Activated B cell treated with CpG ODN at 0.5 μM for 24 hours (primary cell): ENCODE measurements at regions of chr7 and their contacts with region 1.

Region 1: GRCh38 chr7:135147899-135148721 is at the start of gene TMEM140:
- DNase-seq: no peak
- ATAC-seq: peak; percentile 72
- H3K4me3 Mint-ChIP-seq: peak within 1 kb of the TSS; percentile 83
- H3K27ac Mint-ChIP-seq: peak within 1 kb of the TSS; percentile 93
- H3K4me1 Mint-ChIP-seq: peaks cover 73% of the 10 kb centered on the region
- H3K27me3 Mint-ChIP-seq: no peaks in the 10 kb centered on the region
- CTCF ChIP-seq: no peak
- total RNA-seq, gene TMEM140: 18.6 and 20.9 TPM in 2 replicates

Region 2: GRCh38 chr7:134905375-134905774 is 242.7 kb before region 1 on chr7:
- CTCF ChIA-PET with region 1: no interaction called
- POLR2A ChIA-PET with region 1: no interaction called
- intact Hi-C with region 1: no loop called
- DNase-seq: no peak
- ATAC-seq: no peak
- H3K4me3 Mint-ChIP-seq: no peak overlapping the region
- H3K27ac Mint-ChIP-seq: no peak overlapping the region
- H3K4me1 Mint-ChIP-seq: peaks cover 11% of the 10 kb centered on the region
- H3K27me3 Mint-ChIP-seq: peaks cover 4% of the 10 kb centered on the region
- CTCF ChIP-seq: no peak

Region 3: DNA sequence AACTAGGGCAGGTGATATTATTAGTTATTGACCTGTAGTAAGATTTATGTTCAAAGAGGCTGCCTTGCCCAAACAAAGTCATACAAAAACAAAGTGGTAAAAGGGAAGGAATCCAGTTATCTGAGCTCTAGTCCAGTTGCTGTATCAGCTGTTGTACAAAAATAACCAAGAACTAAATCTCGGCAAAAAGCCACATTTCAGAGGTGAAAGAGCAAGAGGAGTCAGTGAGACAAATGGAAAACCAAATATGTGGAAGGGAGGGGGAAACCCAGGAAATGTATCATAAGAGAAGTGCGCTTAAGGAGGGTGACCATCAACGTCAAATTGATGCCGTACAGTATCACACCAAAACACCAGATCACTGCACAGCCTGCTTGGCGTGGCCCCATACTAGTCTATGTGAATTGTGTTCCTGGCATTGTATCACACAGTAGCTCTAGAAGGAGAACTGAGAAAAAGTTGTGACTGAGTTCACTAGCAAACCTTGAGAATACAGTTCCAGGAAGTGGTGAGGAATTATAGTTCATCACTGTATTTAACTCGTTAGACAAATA is 155.4 kb before region 1 on chr7:
- CTCF ChIA-PET with region 1: interaction called, 3 read pairs
- POLR2A ChIA-PET with region 1: interaction called, 44 read pairs
- intact Hi-C with region 1: loop called (anchors 2 kb)
- DNase-seq: no peak
- ATAC-seq: peak; percentile 95
- H3K4me3 Mint-ChIP-seq: peak overlapping the region; percentile 36
- H3K27ac Mint-ChIP-seq: peak overlapping the region; percentile 78
- H3K4me1 Mint-ChIP-seq: peaks cover 27% of the 10 kb centered on the region
- H3K27me3 Mint-ChIP-seq: no peaks in the 10 kb centered on the region
- CTCF ChIP-seq: no peak

Region 4: DNA sequence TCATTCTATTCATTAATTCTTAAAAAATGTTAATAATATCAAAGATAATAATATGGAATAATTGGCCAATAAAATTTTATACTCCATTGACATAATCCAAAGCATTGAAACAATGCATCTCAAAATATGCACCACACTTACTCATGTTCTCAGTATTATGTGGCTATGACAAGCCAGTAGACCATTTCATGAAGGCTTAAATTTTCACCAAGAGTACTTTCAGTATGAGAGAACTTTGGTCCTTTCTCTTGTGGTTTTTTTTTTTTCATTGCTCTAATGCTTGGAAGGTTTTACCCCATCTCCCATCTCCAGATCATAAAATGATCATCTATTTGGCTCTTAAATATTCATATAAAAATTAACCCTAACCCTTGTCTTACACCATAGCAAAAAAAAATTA is 45.7 kb before region 1 on chr7:
- CTCF ChIA-PET with region 1: no interaction called
- POLR2A ChIA-PET with region 1: no interaction called
- intact Hi-C with region 1: loop called (anchors 5 kb)
- DNase-seq: no peak
- ATAC-seq: peak; percentile 28
- H3K4me3 Mint-ChIP-seq: no peak overlapping the region
- H3K27ac Mint-ChIP-seq: no peak overlapping the region
- H3K4me1 Mint-ChIP-seq: no peaks in the 10 kb centered on the region
- H3K27me3 Mint-ChIP-seq: no peaks in the 10 kb centered on the region
- CTCF ChIP-seq: no peak

Region 5: GRCh38 chr7:135160098-135160857 is 12.2 kb after region 1 on chr7:
- CTCF ChIA-PET with region 1: interaction called, 11 read pairs
- POLR2A ChIA-PET with region 1: interaction called, 119 read pairs
- intact Hi-C with region 1: loop called (anchors 1 kb)
- DNase-seq: no peak
- ATAC-seq: peak; percentile 20
- H3K4me3 Mint-ChIP-seq: peak overlapping the region; percentile 65
- H3K27ac Mint-ChIP-seq: peak overlapping the region; percentile 93
- H3K4me1 Mint-ChIP-seq: peaks cover 50% of the 10 kb centered on the region
- H3K27me3 Mint-ChIP-seq: no peaks in the 10 kb centered on the region
- CTCF ChIP-seq: no peak

Region 6: GRCh38 chr7:135186841-135187253 is 38.7 kb after region 1 on chr7:
- CTCF ChIA-PET with region 1: no interaction called
- POLR2A ChIA-PET with region 1: interaction called, 25 read pairs
- intact Hi-C with region 1: loop called (anchors 1 kb)
- DNase-seq: peak; percentile 60
- ATAC-seq: peak; percentile 76
- H3K4me3 Mint-ChIP-seq: peak overlapping the region; percentile 74
- H3K27ac Mint-ChIP-seq: peak overlapping the region; percentile 80
- H3K4me1 Mint-ChIP-seq: peaks cover 51% of the 10 kb centered on the region
- H3K27me3 Mint-ChIP-seq: no peaks in the 10 kb centered on the region
- CTCF ChIP-seq: no peak